Left ventricle myocardium superior (tissue), 1 donor: ENCODE measurements at regions of chr9 and their contacts with region 1.

Region 1: DNA sequence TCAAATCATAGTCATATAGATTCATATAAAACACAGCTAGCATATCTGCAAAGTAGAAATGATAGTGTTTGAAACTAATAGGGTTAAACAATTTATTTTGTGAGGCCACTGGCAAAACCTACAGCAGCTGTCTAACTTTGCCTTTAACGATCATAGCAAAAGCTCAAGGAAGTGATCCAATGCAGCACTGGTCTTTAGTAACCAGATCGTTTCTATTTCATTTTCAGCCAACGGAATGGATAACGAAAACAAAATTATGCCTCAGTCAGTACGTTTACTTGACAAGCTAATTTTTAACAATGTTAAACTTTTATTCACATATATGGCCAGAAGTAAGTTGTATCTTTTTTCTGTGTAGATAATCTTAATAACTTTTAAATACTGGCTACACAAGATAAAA is 17.7 kb downstream of the MLLT3 start:
- DNase-seq: no peak
- ATAC-seq: peak; percentile 43

Region 2: DNA sequence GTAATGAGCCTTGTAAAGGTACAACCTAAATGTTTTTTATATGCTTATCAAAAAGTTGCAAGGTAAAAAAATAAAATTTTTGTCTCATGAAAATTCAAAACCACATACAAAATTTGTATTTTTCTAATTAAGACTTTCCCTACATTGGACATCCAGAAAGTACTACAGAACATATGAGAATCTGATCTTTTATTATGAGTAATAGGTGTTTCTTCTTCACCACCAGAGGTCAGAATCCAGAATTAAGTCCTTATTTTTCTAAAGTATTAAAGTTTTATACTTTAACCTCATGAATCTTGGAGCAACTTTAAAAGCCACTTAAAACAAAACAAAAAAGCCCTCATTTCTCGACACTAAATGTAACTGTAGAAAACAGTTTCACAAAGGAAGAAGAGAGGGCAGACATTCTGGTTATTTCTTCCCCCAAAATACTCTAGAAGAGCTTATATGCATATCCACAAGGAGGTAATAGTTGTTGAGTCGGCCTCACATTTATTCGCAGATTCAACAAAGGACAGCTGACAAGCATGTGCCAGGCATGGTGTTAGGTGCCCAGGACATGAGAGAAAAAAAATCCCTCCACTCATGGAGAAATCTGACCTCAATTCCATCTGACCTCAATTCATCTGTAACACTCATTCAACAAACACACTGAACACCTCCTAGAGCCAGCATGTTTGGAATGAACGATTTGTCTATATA is 51.5 kb before region 1 on chr9:
- intact Hi-C with region 1: loop called (anchors 10 kb)
- DNase-seq: no peak
- ATAC-seq: no peak

Region 3: DNA sequence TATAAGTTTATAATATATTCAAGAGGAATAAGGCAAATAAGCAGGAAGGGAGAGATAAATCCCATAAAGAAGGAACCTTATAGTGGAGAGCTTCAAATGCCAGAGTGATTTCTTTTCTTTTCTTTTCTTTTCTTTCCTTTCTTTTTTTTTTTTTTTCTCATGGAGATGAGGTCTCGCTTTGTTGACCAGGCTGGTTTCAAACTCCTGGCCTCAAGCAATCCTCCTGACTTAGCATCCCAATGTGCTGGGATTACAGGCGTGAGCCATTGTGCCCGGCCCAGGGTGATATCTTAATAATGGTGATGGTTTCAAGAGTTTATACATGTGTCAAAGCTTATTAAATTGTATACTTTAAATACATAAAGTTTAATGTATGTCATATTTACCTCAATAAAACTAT is 59.9 kb after region 1 on chr9:
- intact Hi-C with region 1: no loop called
- DNase-seq: no peak
- ATAC-seq: no peak

Region 4: DNA sequence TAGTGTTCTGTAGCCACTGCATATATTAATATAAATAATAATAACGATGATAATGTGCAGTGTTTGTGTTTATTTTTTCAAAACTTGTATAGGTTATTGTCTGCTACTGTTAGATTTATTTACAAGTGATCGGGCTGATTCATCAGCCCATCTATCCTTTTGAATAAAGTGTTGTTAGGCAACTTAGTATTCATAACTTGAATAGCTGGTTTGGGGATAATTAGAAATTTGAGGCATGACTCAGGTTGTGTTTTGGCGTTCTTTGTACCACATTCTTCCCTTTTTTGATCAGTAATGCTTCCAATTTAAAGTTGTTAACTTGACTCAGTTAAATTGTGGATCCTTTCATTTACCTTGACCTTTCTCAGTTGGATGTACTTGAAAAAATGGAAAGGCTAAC is 149.2 kb after region 1 on chr9:
- intact Hi-C with region 1: no loop called
- DNase-seq: no peak
- ATAC-seq: no peak

Region 5: DNA sequence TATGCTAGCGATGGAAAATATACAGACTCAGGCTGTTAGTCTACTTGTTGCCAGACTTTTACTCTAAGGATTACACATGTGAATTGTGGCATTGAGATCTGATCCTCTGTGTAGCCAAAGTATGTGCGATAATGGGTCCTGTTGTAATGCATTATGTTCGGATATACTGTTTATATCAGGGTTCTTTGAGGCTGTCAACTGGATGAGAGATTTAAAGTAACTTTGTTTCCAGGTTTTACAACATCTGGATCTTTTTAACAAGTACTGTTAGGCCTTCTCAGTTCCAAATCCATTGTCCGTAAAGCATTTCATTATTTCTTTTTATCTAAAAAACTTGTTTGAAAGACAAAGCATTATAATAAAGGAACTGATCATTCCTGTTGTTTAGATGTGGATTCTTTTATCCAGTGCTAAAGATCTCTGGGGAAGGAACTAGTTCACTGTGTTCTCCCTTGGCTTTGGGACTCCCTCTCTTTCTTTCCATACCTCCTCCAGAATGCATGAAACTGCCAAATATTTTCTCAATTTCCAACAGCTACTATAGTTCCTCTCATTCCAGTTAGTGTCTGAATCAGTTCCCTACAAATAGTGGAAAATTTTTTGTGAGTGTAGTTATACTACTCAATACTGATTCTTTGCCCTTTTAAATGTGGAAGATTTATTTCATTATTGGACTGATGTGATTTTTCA is 358.1 kb after region 1 on chr9:
- intact Hi-C with region 1: no loop called
- DNase-seq: no peak
- ATAC-seq: no peak

Region 6: DNA sequence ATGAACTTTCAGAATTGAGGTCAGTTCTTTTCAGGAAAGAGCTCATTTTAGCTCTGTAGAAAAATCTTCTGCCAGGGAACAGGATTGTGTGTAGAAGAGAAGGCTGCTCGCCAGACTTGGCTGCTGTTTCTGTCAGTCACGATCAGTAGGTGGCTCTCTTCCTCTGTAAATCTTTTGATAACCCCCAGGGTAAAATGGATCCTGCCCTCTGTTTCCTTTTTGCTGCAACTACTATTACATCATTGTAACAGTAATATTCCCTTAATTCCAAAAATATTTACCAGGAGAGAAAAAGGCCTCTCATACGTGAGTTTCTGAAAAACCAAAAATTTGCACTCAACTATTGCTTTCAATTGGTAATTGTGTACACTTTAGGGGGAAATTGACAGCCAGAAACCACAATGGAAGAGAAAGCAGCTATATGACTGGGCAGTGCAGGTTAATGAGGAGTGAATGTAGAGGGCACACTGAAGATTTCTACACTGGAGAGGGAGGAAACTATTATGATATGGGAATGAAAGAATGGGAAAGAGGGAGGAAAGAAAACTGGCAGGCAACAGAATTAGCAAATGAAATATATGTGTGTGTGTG is 549.6 kb after region 1 on chr9:
- intact Hi-C with region 1: no loop called
- DNase-seq: no peak
- ATAC-seq: peak; percentile 31